ENCODE measurements at regions of chr17 and their contacts with region 1.

Region 1: GRCh38 chr17:72338847-72339790 is 218.3 kb downstream of the SOX9 start:
- DNase-seq: no peak
- ATAC-seq: no peak
- H3K4me3 ChIP-seq: no peak overlapping the region
- H3K4me3 Mint-ChIP-seq: no peak overlapping the region
- H3K27ac ChIP-seq: no peak overlapping the region
- H3K27ac Mint-ChIP-seq: no peak overlapping the region
- H3K4me1 ChIP-seq: no peaks in the 10 kb centered on the region
- H3K4me1 Mint-ChIP-seq: no peaks in the 10 kb centered on the region
- H3K27me3 ChIP-seq: peaks cover 0 to 7% of the 10 kb centered on the region in 2 experiments
- H3K27me3 Mint-ChIP-seq: peaks cover 20% of the 10 kb centered on the region
- CTCF ChIP-seq: no peak

Region 2: DNA sequence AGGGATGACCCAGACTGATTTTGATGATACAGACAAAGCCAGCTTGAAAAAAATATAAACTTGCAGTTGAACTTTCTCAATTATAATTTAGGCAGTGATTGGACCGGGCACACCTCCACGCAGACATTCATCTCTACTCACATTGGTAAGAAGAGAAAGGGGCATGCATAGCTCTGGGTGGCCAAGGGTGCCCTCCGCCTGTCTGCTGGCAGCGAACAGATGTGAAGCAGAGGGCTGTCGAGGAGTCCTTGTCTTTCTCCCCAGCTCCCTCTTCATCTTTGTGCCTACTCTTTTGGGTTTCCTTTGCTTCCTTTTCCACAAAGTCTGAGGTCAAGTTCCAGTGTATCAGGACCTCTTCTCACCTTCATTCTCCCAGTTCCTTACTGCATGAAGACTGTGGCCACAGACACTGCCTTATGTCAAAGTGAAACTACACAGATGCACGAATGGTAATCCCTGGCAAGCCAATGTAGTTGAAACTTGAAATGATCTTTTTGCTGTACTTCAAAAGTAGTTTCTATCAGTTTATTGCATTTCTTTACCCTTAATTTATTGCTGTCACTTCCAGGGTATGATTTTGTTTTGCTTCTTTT is 562.0 kb before region 1 on chr17:
- CTCF ChIA-PET with region 1: no interaction called
- POLR2A ChIA-PET with region 1: no interaction called
- intact Hi-C with region 1: loop called in 1 of 2 experiments (anchors 10 kb)
- DNase-seq: no peak
- ATAC-seq: no peak
- H3K4me3 ChIP-seq: no peak overlapping the region
- H3K4me3 Mint-ChIP-seq: no peak overlapping the region
- H3K27ac ChIP-seq: no peak overlapping the region
- H3K27ac Mint-ChIP-seq: no peak overlapping the region
- H3K4me1 ChIP-seq: no peaks in the 10 kb centered on the region
- H3K4me1 Mint-ChIP-seq: no peaks in the 10 kb centered on the region
- H3K27me3 ChIP-seq: no peaks in the 10 kb centered on the region
- H3K27me3 Mint-ChIP-seq: no peaks in the 10 kb centered on the region
- CTCF ChIP-seq: no peak

Region 3: GRCh38 chr17:72151565-72152391 is 187.3 kb before region 1 on chr17:
- CTCF ChIA-PET with region 1: no interaction called
- POLR2A ChIA-PET with region 1: no interaction called
- intact Hi-C with region 1: no loop called
- DNase-seq: no peak
- ATAC-seq: no peak
- H3K4me3 ChIP-seq: no peak overlapping the region
- H3K4me3 Mint-ChIP-seq: no peak overlapping the region
- H3K27ac ChIP-seq: no peak overlapping the region
- H3K27ac Mint-ChIP-seq: no peak overlapping the region
- H3K4me1 ChIP-seq: no peaks in the 10 kb centered on the region
- H3K4me1 Mint-ChIP-seq: no peaks in the 10 kb centered on the region
- H3K27me3 ChIP-seq: no peaks in the 10 kb centered on the region
- H3K27me3 Mint-ChIP-seq: peaks cover 23% of the 10 kb centered on the region
- CTCF ChIP-seq: no peak

Region 4: GRCh38 chr17:72255481-72255880 is 83.6 kb before region 1 on chr17:
- CTCF ChIA-PET with region 1: no interaction called
- POLR2A ChIA-PET with region 1: no interaction called
- intact Hi-C with region 1: loop called in 1 of 2 experiments (anchors 10 kb)
- DNase-seq: no peak
- ATAC-seq: no peak
- H3K4me3 ChIP-seq: no peak overlapping the region
- H3K4me3 Mint-ChIP-seq: no peak overlapping the region
- H3K27ac ChIP-seq: no peak overlapping the region
- H3K27ac Mint-ChIP-seq: no peak overlapping the region
- H3K4me1 ChIP-seq: no peaks in the 10 kb centered on the region
- H3K4me1 Mint-ChIP-seq: no peaks in the 10 kb centered on the region
- H3K27me3 ChIP-seq: no peaks in the 10 kb centered on the region
- H3K27me3 Mint-ChIP-seq: no peaks in the 10 kb centered on the region
- CTCF ChIP-seq: no peak

Region 5: DNA sequence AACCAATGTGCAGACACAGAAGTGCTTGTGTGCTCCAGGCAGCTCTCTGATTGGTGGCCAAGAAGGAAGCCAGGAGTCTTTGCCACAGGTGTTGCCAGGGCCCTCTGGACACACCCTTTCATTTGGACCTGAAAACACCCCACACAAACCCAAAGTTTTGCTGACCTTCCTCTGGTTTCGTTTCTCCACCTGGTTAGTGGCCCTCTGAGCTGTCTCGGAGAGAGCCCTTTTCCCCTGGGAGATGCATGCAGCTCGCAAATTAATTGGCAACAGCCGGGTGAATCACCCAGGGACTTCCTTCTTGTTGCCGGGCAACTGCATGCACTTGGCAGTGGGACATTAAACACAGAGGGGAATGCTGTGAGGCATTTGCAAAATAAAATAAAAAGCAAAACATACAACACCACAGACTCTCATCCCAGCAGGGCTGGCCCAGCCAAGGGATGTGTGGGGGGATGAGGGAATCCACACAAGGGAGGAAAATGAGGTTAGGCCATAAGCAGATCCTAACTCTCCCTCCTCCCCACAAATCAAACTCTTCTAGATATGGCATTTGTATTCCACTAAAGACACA is 68.3 kb after region 1 on chr17:
- CTCF ChIA-PET with region 1: no interaction called
- POLR2A ChIA-PET with region 1: no interaction called
- intact Hi-C with region 1: no loop called
- DNase-seq: no peak
- ATAC-seq: no peak
- H3K4me3 ChIP-seq: no peak overlapping the region
- H3K4me3 Mint-ChIP-seq: no peak overlapping the region
- H3K27ac ChIP-seq: no peak overlapping the region
- H3K27ac Mint-ChIP-seq: no peak overlapping the region
- H3K4me1 ChIP-seq: no peaks in the 10 kb centered on the region
- H3K4me1 Mint-ChIP-seq: no peaks in the 10 kb centered on the region
- H3K27me3 ChIP-seq: no peaks in the 10 kb centered on the region
- H3K27me3 Mint-ChIP-seq: no peaks in the 10 kb centered on the region
- CTCF ChIP-seq: no peak

Measured in CD4-positive, alpha-beta T cell (primary cell).